HepG2 (cell line): ENCODE measurements at regions of chr5 and their contacts with region 1.

Region 1: GRCh38 chr5:111075520-111075919 is 4.0 kb downstream of the TSLP start:
- DNase-seq: no peak
- ATAC-seq: no peak
- H3K4me3 ChIP-seq: no peak overlapping the region
- H3K27ac ChIP-seq: no peak overlapping the region
- H3K4me1 ChIP-seq: peaks cover 15% of the 10 kb centered on the region
- H3K27me3 ChIP-seq: peaks cover 0 to 32% of the 10 kb centered on the region in 2 experiments; a peak in 4 of 5 replicates
- CTCF ChIP-seq: no peak
- EP300 ChIP-seq: no peak
- POLR2A ChIP-seq: no peak
- RAD21 ChIP-seq: no peak

Region 2: GRCh38 chr5:111121926-111122325 is 46.4 kb after region 1 on chr5:
- CTCF ChIA-PET with region 1: no interaction called
- POLR2A ChIA-PET with region 1: no interaction called
- in situ Hi-C with region 1: no loop called
- intact Hi-C with region 1: loop called (anchors 1 kb)
- DNase-seq: no peak
- ATAC-seq: no peak
- H3K4me3 ChIP-seq: no peak overlapping the region
- H3K27ac ChIP-seq: no peak overlapping the region
- H3K4me1 ChIP-seq: no peaks in the 10 kb centered on the region
- H3K27me3 ChIP-seq: no peaks in the 10 kb centered on the region
- CTCF ChIP-seq: no peak
- EP300 ChIP-seq: no peak
- POLR2A ChIP-seq: no peak
- RAD21 ChIP-seq: no peak